ENCODE measurements at regions of chr11 and their contacts with region 1.

Region 1: GRCh38 chr11:40129266-40129665 is 1330.2 kb downstream of the LRRC4C start:
- DNase-seq: peak in 1 of 2 experiments; percentile 18
- H3K4me3 ChIP-seq: no peak overlapping the region
- H3K4me3 Mint-ChIP-seq: no peak overlapping the region
- H3K27ac Mint-ChIP-seq: no peak overlapping the region
- H3K4me1 ChIP-seq: no peaks in the 10 kb centered on the region
- H3K4me1 Mint-ChIP-seq: peaks cover 7% of the 10 kb centered on the region
- H3K27me3 ChIP-seq: no peaks in the 10 kb centered on the region
- H3K27me3 Mint-ChIP-seq: peaks cover 9% of the 10 kb centered on the region
- CTCF ChIP-seq: peak; percentile 39 to 47

Region 2: DNA sequence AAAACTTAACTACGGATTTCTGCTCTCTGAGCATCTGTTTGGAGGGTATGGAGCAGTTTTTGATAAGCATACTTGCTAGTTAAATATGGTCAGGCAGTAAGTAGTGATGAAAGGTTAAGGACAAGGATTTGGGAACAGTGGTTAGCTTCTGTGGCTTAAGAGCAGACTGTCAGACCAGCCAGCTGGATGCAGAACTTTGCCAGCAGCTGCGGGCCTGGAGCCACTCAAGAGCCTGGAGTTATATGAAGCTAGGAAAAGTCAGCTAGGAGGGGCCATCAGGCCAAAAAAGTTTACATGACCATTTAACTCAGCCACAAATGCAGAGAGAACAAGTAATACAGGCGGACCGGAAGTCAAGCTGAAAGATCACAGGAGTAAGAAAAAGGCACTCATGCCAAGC is 487.5 kb before region 1 on chr11:
- CTCF ChIA-PET with region 1: no interaction called
- POLR2A ChIA-PET with region 1: no interaction called
- intact Hi-C with region 1: loop called (anchors 10 kb)
- DNase-seq: no peak
- H3K4me3 ChIP-seq: no peak overlapping the region
- H3K4me3 Mint-ChIP-seq: no peak overlapping the region
- H3K27ac Mint-ChIP-seq: no peak overlapping the region
- H3K4me1 ChIP-seq: no peaks in the 10 kb centered on the region
- H3K4me1 Mint-ChIP-seq: no peaks in the 10 kb centered on the region
- H3K27me3 ChIP-seq: no peaks in the 10 kb centered on the region
- H3K27me3 Mint-ChIP-seq: no peaks in the 10 kb centered on the region
- CTCF ChIP-seq: no peak

Region 3: DNA sequence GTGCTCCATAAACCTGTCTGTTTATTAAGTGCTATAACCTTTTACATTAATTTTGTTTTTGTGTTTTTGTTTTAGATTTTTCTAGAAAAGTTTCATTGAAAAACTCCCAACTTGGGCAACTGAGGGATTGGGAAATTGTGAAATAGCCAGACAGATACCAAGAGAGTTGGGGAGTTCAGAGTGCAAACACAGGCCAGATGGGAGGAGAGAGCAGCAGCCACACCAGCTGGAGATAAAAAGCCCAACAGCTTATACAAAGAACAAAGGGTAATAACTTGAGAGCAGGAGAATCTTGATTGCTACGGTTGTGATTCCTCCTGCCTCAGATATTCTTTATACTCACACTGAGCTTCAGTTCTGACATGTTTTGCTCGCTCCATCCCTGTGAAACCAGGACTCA is 312.0 kb before region 1 on chr11:
- CTCF ChIA-PET with region 1: interaction called, 3 read pairs
- POLR2A ChIA-PET with region 1: no interaction called
- intact Hi-C with region 1: loop called (anchors 10 kb)
- DNase-seq: no peak
- H3K4me3 ChIP-seq: no peak overlapping the region
- H3K4me3 Mint-ChIP-seq: no peak overlapping the region
- H3K27ac Mint-ChIP-seq: no peak overlapping the region
- H3K4me1 ChIP-seq: peaks cover 6% of the 10 kb centered on the region
- H3K4me1 Mint-ChIP-seq: peaks cover 5% of the 10 kb centered on the region
- H3K27me3 ChIP-seq: no peaks in the 10 kb centered on the region; the same call in 1 of the 2 replicates
- H3K27me3 Mint-ChIP-seq: no peaks in the 10 kb centered on the region
- CTCF ChIP-seq: no peak

Region 4: DNA sequence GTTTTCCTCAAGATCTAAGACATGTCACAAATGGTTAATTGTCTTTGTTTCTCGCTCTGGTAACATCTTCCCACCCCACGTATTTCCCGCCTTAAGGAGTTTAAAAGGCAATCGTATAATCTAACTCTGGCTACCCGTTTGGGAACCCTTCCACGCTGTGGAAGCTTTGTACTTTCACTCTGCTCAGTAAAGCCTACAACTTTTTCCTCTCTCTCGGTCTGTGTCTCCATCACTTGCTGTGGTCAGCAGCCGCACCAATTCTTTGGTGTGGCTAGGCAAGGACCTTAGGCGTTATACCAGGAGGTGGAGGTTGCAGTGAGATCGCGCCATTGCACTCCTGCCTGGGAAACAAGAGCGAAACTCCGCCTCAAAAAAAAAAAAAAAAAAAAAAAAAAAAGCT is 99.9 kb before region 1 on chr11:
- CTCF ChIA-PET with region 1: interaction called, 3 read pairs
- POLR2A ChIA-PET with region 1: no interaction called
- intact Hi-C with region 1: loop called (anchors 1 kb)
- DNase-seq: peak; percentile 74 to 83
- H3K4me3 ChIP-seq: peak overlapping the region; percentile 35
- H3K4me3 Mint-ChIP-seq: peak overlapping the region; percentile 79
- H3K27ac Mint-ChIP-seq: peak overlapping the region; percentile 87
- H3K4me1 ChIP-seq: peaks cover 31% of the 10 kb centered on the region
- H3K4me1 Mint-ChIP-seq: peaks cover 22% of the 10 kb centered on the region
- H3K27me3 ChIP-seq: no peaks in the 10 kb centered on the region
- H3K27me3 Mint-ChIP-seq: no peaks in the 10 kb centered on the region
- CTCF ChIP-seq: no peak

Measured in Caco-2 (cell line).